A549 (cell line): ENCODE measurements at regions of chr17 and their contacts with region 1.

Region 1: DNA sequence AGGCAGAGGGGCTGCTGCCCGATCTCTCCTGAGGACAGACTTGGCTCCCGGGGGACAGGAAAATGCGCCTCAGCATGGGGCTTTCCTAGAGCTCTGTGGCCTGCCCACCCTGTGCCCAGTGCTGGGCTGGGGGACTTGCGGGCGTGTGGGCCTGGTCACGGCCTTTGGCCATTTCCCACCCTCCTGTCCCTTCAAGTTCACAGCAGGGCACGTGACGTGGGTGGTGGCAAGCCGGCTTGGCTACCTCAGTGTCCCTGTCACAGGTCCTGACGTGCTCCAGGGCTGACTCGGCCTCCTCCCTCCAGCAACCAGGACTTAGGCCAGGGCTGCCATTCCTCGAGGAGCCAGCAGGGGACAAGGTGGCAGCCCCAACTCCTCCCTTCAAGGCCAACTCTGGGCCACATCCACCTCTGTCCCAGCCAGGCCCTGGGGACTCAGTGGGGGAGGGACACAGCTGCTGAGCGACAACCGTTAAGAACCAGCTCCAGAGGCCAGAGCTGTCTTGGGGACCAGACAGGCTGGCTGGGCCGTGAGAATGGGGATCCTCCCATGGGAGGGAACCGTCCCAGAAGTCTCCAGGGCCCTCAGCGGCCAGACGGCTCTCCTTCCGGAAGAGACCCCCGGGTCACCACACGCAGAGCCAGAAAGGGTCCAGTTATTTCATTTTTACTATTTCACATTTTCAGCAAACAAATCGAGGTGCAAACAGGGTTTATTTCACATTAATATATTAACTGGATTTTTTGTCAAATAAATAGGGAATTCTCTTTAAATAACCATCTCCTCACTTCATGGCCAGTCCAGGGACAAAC is 1.1 kb upstream of the UNC13D start:
- DNase-seq: peak; percentile 91 to 92
- ATAC-seq: peak; percentile 69 to 87
- H3K4me3 ChIP-seq: peak overlapping the region; percentile 0; the same call in 1 of the 3 replicates
- H3K27ac ChIP-seq: peak overlapping the region; percentile 79 to 89
- H3K4me1 ChIP-seq: peaks cover 43% of the 10 kb centered on the region
- CTCF ChIP-seq: peak; percentile 49
- EP300 ChIP-seq: no peak
- POLR2A ChIP-seq: no peak
- RAD21 ChIP-seq: peak in 1 of 2 experiments; percentile 23; a peak in 1 of 5 replicates

Region 2: GRCh38 chr17:75764711-75765421 is 80.4 kb before region 1 on chr17 and contains the start of gene GALK1:
- CTCF ChIA-PET with region 1: interaction called, 20 read pairs
- POLR2A ChIA-PET with region 1: interaction called, 3 read pairs
- DNase-seq: peak; percentile 78 to 81
- ATAC-seq: peak; percentile 89 to 91
- H3K4me3 ChIP-seq: peak within 1 kb of the TSS; percentile 68
- H3K27ac ChIP-seq: peak within 1 kb of the TSS; percentile 83 to 92
- H3K4me1 ChIP-seq: peaks cover 13% of the 10 kb centered on the region
- CTCF ChIP-seq: peak; percentile 65
- EP300 ChIP-seq: no peak
- POLR2A ChIP-seq: peak; percentile 71
- RAD21 ChIP-seq: peak; percentile 59 to 66
- polyA plus RNA-seq, gene GALK1: 20.7 and 21.3 TPM in 2 replicates

Region 3: GRCh38 chr17:75855310-75856081 is 10.2 kb after region 1 on chr17 and contains the start of gene WBP2:
- CTCF ChIA-PET with region 1: interaction called, 691 read pairs
- POLR2A ChIA-PET with region 1: interaction called, 8 read pairs
- DNase-seq: peak; percentile 100
- ATAC-seq: peak; percentile 90 to 95
- H3K4me3 ChIP-seq: peak within 1 kb of the TSS; percentile 58
- H3K27ac ChIP-seq: peak within 1 kb of the TSS; percentile 83 to 91
- H3K4me1 ChIP-seq: peaks cover 19% of the 10 kb centered on the region
- CTCF ChIP-seq: peak; percentile 63
- EP300 ChIP-seq: no peak
- POLR2A ChIP-seq: peak; percentile 95
- RAD21 ChIP-seq: peak in 1 of 2 experiments; percentile 65; a peak in 4 of 5 replicates
- polyA plus RNA-seq, gene WBP2: 35.6 and 39.7 TPM in 2 replicates

Region 4: GRCh38 chr17:75872434-75873351 is 27.4 kb after region 1 on chr17:
- CTCF ChIA-PET with region 1: interaction called, 92 read pairs
- POLR2A ChIA-PET with region 1: no interaction called
- DNase-seq: peak; percentile 82 to 87
- ATAC-seq: peak; percentile 7 to 52; a peak in 4 of 6 replicates
- H3K4me3 ChIP-seq: no peak overlapping the region
- H3K27ac ChIP-seq: peak overlapping the region; percentile 68 to 85
- H3K4me1 ChIP-seq: peaks cover 56% of the 10 kb centered on the region
- CTCF ChIP-seq: no peak
- EP300 ChIP-seq: no peak
- POLR2A ChIP-seq: no peak
- RAD21 ChIP-seq: no peak

Region 5: GRCh38 chr17:75904749-75905521 is 59.7 kb after region 1 on chr17 and contains the start of gene MRPL38:
- CTCF ChIA-PET with region 1: interaction called, 13 read pairs
- POLR2A ChIA-PET with region 1: no interaction called
- DNase-seq: peak; percentile 97 to 98
- ATAC-seq: peak; percentile 96 to 97
- H3K4me3 ChIP-seq: peak within 1 kb of the TSS; percentile 87
- H3K27ac ChIP-seq: peak within 1 kb of the TSS; percentile 86 to 93
- H3K4me1 ChIP-seq: peaks cover 22% of the 10 kb centered on the region
- CTCF ChIP-seq: peak; percentile 99
- EP300 ChIP-seq: no peak
- POLR2A ChIP-seq: peak; percentile 92
- RAD21 ChIP-seq: peak; percentile 90 to 98
- polyA plus RNA-seq, gene MRPL38: 43.4 and 53.5 TPM in 2 replicates

Region 6: DNA sequence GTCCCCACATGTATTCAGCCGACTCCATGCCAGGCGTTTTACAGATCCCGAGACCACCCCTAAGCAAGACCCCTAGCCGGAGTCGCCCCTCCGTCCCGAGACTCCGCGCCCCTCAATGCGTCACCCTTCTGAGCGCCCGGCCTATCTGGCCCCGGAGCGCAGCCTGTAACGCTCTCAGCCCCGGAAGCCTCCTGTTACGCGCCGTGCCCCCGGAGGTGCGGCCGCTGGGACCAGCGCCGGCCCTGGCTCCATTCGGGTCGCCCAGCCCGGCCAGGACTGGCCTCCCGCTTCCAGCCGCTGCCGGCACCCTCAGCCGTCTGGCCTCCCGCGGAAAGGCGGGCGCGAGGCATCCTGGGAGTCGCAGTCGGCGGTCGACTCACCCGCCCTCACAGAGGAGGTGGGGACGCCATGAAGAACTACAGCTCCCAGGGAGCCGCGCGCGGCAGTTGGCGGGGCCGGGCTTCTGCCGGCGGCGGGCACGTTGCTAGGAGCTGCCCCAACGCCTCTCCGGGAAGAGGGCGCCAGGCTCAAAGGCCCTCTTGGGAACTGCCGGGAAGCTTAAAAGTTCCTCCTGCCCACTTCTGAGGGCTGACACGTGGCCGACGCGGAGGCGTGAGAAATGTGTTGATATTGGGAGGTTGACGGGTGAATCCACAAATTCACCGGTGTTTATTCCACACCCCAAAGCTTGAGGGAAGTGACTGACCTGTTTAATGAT is 95.6 kb after region 1 on chr17 and contains the start of gene FBF1:
- CTCF ChIA-PET with region 1: no interaction called
- POLR2A ChIA-PET with region 1: no interaction called
- DNase-seq: peak; percentile 97 to 99
- ATAC-seq: peak; percentile 100
- H3K4me3 ChIP-seq: peak within 1 kb of the TSS; percentile 67
- H3K27ac ChIP-seq: peak within 1 kb of the TSS; percentile 82 to 94
- H3K4me1 ChIP-seq: peaks cover 5% of the 10 kb centered on the region; the same call in 1 of the 3 replicates
- CTCF ChIP-seq: no peak
- EP300 ChIP-seq: no peak
- POLR2A ChIP-seq: peak; percentile 96
- RAD21 ChIP-seq: no peak
- polyA plus RNA-seq, gene FBF1: 7.9 and 8.5 TPM in 2 replicates